Activated T-helper 2 cell treated with anti-CD3 and anti-CD28 coated beads, Interferon-gamma antibody, Interleukin-2, Interleukin-4, amounts not matched to agents 10 μg/mL and 5 μg/mL and 100 μg/mL, durations not matched to agents 14 hours and 24 hours and 36 hours (primary cell): ENCODE measurements at regions of chr11 and their contacts with region 1.

Region 1: DNA sequence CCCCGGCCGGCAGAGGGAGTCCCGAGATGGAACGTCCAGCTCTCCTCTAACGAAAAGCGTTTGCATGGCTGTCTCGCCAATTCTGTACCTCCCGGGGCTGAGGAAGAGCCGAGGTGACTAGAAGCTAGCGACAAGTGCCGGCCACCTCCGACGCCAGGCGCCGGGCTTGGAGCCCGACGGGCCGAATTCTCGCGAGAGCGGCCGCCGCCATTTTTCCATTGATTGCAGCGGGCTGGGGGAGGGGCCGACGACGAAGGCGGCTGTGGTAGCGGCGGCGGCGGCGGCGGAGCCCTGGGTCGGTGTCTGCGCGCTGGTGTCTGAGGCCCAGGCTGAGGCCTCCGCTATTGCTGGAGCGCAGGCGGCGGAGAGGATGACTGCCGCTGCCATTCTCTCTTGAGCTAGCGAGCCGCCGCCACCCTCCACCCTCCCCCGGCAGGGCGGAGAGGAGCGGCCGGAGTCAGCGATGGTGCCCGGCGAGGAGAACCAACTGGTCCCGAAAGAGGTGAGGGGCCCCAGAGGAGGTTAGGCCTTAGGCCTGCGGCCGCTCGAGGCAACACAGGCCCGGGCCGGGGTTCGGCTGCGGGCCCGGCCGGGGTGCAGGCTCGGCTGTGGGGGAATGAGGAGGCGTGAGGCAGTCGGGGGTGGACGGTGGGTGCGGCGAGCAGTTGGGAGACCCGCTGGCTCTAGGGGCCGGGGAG is at the start of gene USP47:
- DNase-seq: peak; percentile 92
- H3K4me3 Mint-ChIP-seq: no peak within 1 kb of the TSS
- H3K27ac Mint-ChIP-seq: peak within 1 kb of the TSS; percentile 64
- H3K4me1 Mint-ChIP-seq: peaks cover 5% of the 10 kb centered on the region
- H3K27me3 Mint-ChIP-seq: peaks cover 18% of the 10 kb centered on the region
- total RNA-seq, gene USP47: 52.1 and 55.8 TPM in 2 replicates

Region 2: GRCh38 chr11:10857709-10858438 is 984.0 kb before region 1 on chr11 and contains the start of gene ZBED5:
- intact Hi-C with region 1: loop called (anchors 2 kb)
- DNase-seq: peak; percentile 96
- H3K4me3 Mint-ChIP-seq: peak within 1 kb of the TSS; percentile 100
- H3K27ac Mint-ChIP-seq: peak within 1 kb of the TSS; percentile 100
- H3K4me1 Mint-ChIP-seq: peaks cover 36% of the 10 kb centered on the region
- H3K27me3 Mint-ChIP-seq: no peaks in the 10 kb centered on the region
- total RNA-seq, gene ZBED5: 39.2 and 40.3 TPM in 2 replicates

Region 3: GRCh38 chr11:11798586-11799438 is 43.1 kb before region 1 on chr11:
- intact Hi-C with region 1: loop called (anchors 2 kb)
- DNase-seq: peak; percentile 31
- H3K4me3 Mint-ChIP-seq: no peak overlapping the region
- H3K27ac Mint-ChIP-seq: no peak overlapping the region
- H3K4me1 Mint-ChIP-seq: no peaks in the 10 kb centered on the region
- H3K27me3 Mint-ChIP-seq: peaks cover 33% of the 10 kb centered on the region

Region 4: GRCh38 chr11:11864803-11865202 is 22.9 kb after region 1 on chr11:
- intact Hi-C with region 1: loop called (anchors 2 kb)
- DNase-seq: no peak
- H3K4me3 Mint-ChIP-seq: no peak overlapping the region
- H3K27ac Mint-ChIP-seq: no peak overlapping the region
- H3K4me1 Mint-ChIP-seq: peaks cover 31% of the 10 kb centered on the region
- H3K27me3 Mint-ChIP-seq: no peaks in the 10 kb centered on the region